ENCODE measurements at regions of chr15 and their contacts with region 1.

Region 1: GRCh38 chr15:31058236-31058962 is 43.1 kb downstream of the TRPM1 start:
- DNase-seq: no peak
- H3K4me3 ChIP-seq: no peak overlapping the region
- H3K27ac ChIP-seq: no peak overlapping the region
- H3K4me1 ChIP-seq: peaks cover 0 to 4% (median 0%) of the 10 kb centered on the region in 4 donors
- H3K27me3 ChIP-seq: peaks cover 0 to 2% of the 10 kb centered on the region in 2 donors
- CTCF ChIP-seq: no peak

Region 2: GRCh38 chr15:30903497-30904201 is 154.8 kb before region 1 on chr15 and contains the start of gene FAN1:
- intact Hi-C with region 1: no loop called
- DNase-seq: peak; percentile 84 to 92
- H3K4me3 ChIP-seq: peak within 1 kb of the TSS; percentile 83 to 88
- H3K27ac ChIP-seq: peak within 1 kb of the TSS; percentile 74 to 75
- H3K4me1 ChIP-seq: peaks cover 0 to 25% (median 13%) of the 10 kb centered on the region in 4 donors
- H3K27me3 ChIP-seq: no peaks in the 10 kb centered on the region
- CTCF ChIP-seq: no peak

Region 3: DNA sequence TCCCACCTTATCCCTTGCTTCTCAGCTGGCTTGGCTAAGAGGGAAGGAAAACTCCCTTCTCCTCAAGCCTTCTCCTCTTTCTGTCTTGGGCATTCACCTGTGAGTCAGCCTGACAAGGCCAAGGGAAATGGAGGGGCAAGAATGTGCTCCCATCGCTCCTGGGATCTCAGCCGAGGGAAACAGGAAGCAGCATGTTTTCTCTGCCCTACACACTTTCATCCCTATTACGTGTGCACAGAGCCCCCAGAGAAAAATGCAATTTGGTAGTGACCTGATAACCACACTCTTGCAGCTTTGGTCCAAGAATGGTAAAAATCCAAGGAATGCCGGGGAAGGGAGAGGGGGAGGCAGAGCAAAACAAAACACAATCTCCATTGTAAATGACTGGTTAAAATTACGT is 34.1 kb before region 1 on chr15:
- intact Hi-C with region 1: no loop called
- DNase-seq: no peak
- H3K4me3 ChIP-seq: no peak overlapping the region
- H3K27ac ChIP-seq: no peak overlapping the region
- H3K4me1 ChIP-seq: peaks cover 0 to 10% (median 6%) of the 10 kb centered on the region in 4 donors
- H3K27me3 ChIP-seq: no peaks in the 10 kb centered on the region
- CTCF ChIP-seq: no peak

Region 4: GRCh38 chr15:31101262-31102038 is 43.1 kb after region 1 on chr15 and contains the start of gene TRPM1:
- intact Hi-C with region 1: loop called (anchors 5 kb)
- DNase-seq: no peak
- H3K4me3 ChIP-seq: no peak within 1 kb of the TSS
- H3K27ac ChIP-seq: no peak within 1 kb of the TSS
- H3K4me1 ChIP-seq: no peaks in the 10 kb centered on the region
- H3K27me3 ChIP-seq: peaks cover 0 to 12% of the 10 kb centered on the region in 2 donors
- CTCF ChIP-seq: no peak

Region 5: GRCh38 chr15:31263751-31264558 is 205.6 kb after region 1 on chr15:
- intact Hi-C with region 1: no loop called
- DNase-seq: peak; percentile 64 to 83
- H3K4me3 ChIP-seq: no peak overlapping the region
- H3K27ac ChIP-seq: no peak overlapping the region
- H3K4me1 ChIP-seq: peaks cover 0 to 8% (median 0%) of the 10 kb centered on the region in 4 donors
- H3K27me3 ChIP-seq: no peaks in the 10 kb centered on the region
- CTCF ChIP-seq: no peak